ENCODE measurements at regions of chr3 and their contacts with region 1.

Region 1: DNA sequence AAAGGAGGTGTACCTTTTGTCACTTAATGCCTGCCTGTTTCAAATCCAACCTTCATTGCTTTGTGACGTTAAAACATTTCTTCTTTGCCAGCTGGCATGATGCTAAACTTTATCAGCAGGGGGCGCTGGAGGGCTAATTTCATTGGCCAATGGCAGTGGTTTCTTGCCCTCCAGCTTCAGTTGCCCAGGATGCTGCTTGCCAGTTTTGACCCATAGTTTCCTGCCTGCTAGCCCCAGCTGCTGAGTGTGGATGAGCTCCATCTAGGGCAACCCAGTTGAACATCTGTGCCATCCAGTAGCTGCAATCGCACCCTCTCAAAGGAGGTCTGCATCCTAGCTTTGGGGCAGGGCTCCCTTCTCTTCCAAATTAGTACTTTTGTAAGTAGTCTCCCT is 22.1 kb downstream of the ACKR2 start:
- DNase-seq: peak; percentile 61
- CTCF ChIP-seq: peak; percentile 77

Region 2: GRCh38 chr3:42421818-42422796 is 409.2 kb before region 1 on chr3:
- CTCF ChIA-PET with region 1: no interaction called
- POLR2A ChIA-PET with region 1: no interaction called
- DNase-seq: no peak
- CTCF ChIP-seq: no peak

Region 3: DNA sequence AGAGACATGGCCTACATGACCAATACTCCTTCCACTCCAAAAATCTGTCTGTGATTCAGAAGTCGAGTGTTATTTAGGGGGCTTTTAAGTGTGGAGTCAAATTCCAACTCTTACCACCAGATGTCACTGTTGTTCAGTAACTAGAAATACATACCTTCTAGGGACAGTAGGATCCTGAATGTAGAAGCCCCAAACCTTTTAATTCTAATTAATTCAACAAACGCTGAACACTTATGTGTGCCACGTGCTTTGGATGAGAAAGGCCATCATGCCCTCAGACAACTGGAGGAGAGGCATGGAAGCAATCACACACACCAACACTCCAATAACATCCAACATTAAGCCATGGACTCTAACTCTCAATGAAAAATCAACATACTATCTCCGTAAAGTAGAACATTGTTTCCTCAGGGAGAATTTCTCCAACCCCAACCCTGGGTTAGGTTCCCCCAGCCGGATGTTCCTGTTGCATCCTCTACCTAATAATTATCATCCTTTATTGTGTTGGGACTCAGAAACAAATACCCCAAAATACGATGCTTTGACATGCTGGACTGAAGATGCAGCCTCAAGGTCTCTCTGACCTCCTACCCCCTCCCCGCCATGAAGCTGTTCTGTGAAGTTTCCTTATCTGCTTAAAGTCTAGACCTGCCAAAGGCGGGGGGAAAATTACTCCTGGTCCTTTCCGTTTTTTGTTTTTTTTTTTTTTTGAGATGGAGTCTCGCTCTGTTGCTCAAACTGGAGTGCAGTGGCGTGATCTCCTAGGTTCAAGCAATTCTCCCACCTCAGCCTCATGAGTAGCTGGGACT is 50.2 kb before region 1 on chr3:
- CTCF ChIA-PET with region 1: interaction called, 17 read pairs
- POLR2A ChIA-PET with region 1: no interaction called
- DNase-seq: peak; percentile 60
- CTCF ChIP-seq: peak; percentile 58

Region 4: DNA sequence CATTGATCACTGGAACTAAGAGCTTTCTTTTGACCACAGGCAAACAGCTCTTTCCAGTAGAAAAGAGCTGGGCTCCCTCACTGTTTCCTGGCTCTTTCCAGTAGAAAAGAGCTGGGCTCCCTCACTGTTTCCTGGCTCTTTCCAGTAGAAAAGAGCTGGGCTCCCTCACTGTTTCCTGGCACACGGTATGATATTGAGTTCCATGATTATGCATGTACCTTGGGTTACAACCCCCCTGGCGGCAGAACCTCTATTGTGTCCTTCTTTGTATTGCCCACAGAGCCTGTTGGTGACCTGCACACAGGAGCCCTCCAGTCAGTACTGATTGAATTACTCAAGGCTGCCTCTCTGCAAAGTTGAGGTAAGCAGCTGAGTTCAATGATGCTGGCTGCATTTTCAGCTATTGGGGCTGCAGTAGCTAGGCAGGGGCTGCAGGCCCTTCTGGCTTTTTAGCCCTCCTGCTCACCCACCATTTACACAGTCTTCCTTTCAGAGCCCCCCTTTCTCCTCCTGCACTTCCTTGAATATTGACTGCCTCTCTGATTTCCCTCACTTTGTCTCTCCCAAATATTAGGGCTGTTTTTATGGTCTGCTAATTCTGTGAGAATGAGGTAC is 11.9 kb before region 1 on chr3:
- CTCF ChIA-PET with region 1: interaction called, 18 read pairs
- POLR2A ChIA-PET with region 1: no interaction called
- DNase-seq: no peak
- CTCF ChIP-seq: no peak

Region 5: GRCh38 chr3:43036621-43037423 is 205.5 kb after region 1 on chr3:
- CTCF ChIA-PET with region 1: no interaction called
- POLR2A ChIA-PET with region 1: no interaction called
- DNase-seq: no peak
- CTCF ChIP-seq: no peak

Measured in GM10248 (cell line).